Body of pancreas (tissue), 4 donors: ENCODE measurements at regions of chr10 and their contacts with region 1.

Region 1: GRCh38 chr10:79184145-79184625 is 115.4 kb downstream of the ZMIZ1 start:
- DNase-seq: peak; percentile 58 to 79 (median 74)
- ATAC-seq: peak; percentile 69
- H3K4me3 ChIP-seq: no peak overlapping the region
- H3K27ac ChIP-seq: peak overlapping the region; percentile 6 to 83 (median 80)
- H3K4me1 ChIP-seq: peaks cover 79% of the 10 kb centered on the region
- H3K27me3 ChIP-seq: no peaks in the 10 kb centered on the region
- CTCF ChIP-seq: no peak
- POLR2A ChIP-seq: peak in 2 of 3 donors; percentile 26 to 31

Region 2: GRCh38 chr10:79069325-79070080 is 114.7 kb before region 1 on chr10:
- intact Hi-C with region 1: loop called (anchors 10 kb)
- DNase-seq: peak; percentile 45 to 61 (median 58)
- ATAC-seq: peak; percentile 3
- H3K4me3 ChIP-seq: peak overlapping the region; percentile 70 to 71
- H3K27ac ChIP-seq: peak overlapping the region; percentile 95 to 97 (median 96)
- H3K4me1 ChIP-seq: peaks cover 59% of the 10 kb centered on the region
- H3K27me3 ChIP-seq: no peaks in the 10 kb centered on the region
- CTCF ChIP-seq: peak in 1 of 7 experiments; percentile 11
- POLR2A ChIP-seq: peak in 2 of 3 donors; percentile 41 to 45